ENCODE measurements at regions of chr5 and their contacts with region 1.

Region 1: DNA sequence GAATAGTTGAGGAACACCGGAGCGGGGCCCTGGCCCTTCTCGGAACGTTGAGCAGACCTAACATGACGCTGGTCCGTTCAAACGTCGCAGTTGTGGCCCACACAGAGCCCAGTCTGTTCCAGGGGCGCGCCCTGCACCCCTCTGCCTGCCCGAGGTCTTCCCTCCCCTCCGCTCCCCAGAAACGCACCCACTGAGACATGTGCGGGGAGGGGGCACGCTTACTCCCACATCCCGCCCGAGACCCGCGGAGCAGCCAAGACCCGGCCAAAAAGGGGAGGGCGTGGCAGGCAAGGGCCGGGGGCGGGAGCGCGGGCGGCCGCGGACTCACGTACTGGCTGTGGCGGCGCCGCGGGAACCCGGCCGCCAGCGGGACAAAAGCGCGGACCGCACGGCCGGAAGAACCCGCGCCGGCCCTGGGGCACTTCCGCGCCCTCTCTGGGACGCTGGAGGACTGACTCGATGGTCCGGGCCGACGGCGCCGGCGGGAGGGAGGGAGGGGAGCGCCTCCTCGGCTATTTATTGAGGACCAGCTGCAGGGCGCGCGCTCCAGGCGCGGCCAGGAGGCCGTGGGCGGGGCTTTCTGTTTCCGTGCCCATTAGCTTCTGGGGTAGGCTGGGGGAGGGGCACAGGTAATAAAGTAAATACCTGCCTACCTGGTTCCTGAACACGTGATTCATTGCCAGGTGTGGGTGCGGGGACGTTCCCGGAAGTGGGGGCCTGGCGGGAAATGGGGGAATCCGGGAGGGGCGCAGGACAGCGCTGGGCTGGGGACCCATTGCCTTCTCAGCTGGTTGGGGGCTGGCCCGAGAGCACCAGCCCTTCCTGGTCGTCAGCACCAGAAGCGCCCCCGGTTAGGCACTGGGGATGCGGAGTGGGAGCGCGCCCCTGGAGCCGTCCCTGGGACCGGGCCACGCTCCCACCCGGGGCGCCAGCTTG is at the start of gene ZFP62:
- DNase-seq: peak; percentile 90
- H3K4me3 ChIP-seq: peak within 1 kb of the TSS; percentile 44 to 79 (median 67)
- H3K27ac ChIP-seq: peak within 1 kb of the TSS; percentile 55
- H3K4me1 ChIP-seq: peaks cover 10% of the 10 kb centered on the region
- H3K27me3 ChIP-seq: no peaks in the 10 kb centered on the region
- CTCF ChIP-seq: no peak
- POLR2A ChIP-seq: peak; percentile 59
- total RNA-seq, gene ZFP62: 14.6 and 19.7 TPM in 2 replicates

Region 2: GRCh38 chr5:180802325-180803180 is 58.6 kb before region 1 on chr5 and contains the start of gene MGAT1:
- CTCF ChIA-PET with region 1: no interaction called
- POLR2A ChIA-PET with region 1: no interaction called
- dilution Hi-C with region 1: no loop called
- intact Hi-C with region 1: loop called (anchors 1 kb)
- DNase-seq: peak; percentile 87
- H3K4me3 ChIP-seq: peak within 1 kb of the TSS; percentile 46 to 98 (median 69)
- H3K27ac ChIP-seq: peak within 1 kb of the TSS; percentile 67
- H3K4me1 ChIP-seq: peaks cover 44% of the 10 kb centered on the region
- H3K27me3 ChIP-seq: no peaks in the 10 kb centered on the region
- CTCF ChIP-seq: no peak
- POLR2A ChIP-seq: peak; percentile 85
- total RNA-seq, gene MGAT1: 108 and 123 TPM in 2 replicates

Region 3: GRCh38 chr5:180810210-180810958 is 50.8 kb before region 1 on chr5:
- CTCF ChIA-PET with region 1: no interaction called
- POLR2A ChIA-PET with region 1: interaction called, 3 read pairs
- dilution Hi-C with region 1: no loop called
- intact Hi-C with region 1: loop called (anchors 1 kb)
- DNase-seq: peak; percentile 95
- H3K4me3 ChIP-seq: peak overlapping the region; percentile 43 to 72 (median 60)
- H3K27ac ChIP-seq: peak overlapping the region; percentile 88
- H3K4me1 ChIP-seq: peaks cover 38% of the 10 kb centered on the region
- H3K27me3 ChIP-seq: no peaks in the 10 kb centered on the region
- CTCF ChIP-seq: no peak
- POLR2A ChIP-seq: peak; percentile 56

Region 4: GRCh38 chr5:180816608-180817534 is 44.3 kb before region 1 on chr5:
- CTCF ChIA-PET with region 1: no interaction called
- POLR2A ChIA-PET with region 1: no interaction called
- dilution Hi-C with region 1: no loop called
- intact Hi-C with region 1: loop called (anchors 1 kb)
- DNase-seq: peak; percentile 83
- H3K4me3 ChIP-seq: no peak overlapping the region
- H3K27ac ChIP-seq: peak overlapping the region; percentile 39
- H3K4me1 ChIP-seq: peaks cover 24% of the 10 kb centered on the region
- H3K27me3 ChIP-seq: no peaks in the 10 kb centered on the region
- CTCF ChIP-seq: no peak
- POLR2A ChIP-seq: no peak

Region 5: DNA sequence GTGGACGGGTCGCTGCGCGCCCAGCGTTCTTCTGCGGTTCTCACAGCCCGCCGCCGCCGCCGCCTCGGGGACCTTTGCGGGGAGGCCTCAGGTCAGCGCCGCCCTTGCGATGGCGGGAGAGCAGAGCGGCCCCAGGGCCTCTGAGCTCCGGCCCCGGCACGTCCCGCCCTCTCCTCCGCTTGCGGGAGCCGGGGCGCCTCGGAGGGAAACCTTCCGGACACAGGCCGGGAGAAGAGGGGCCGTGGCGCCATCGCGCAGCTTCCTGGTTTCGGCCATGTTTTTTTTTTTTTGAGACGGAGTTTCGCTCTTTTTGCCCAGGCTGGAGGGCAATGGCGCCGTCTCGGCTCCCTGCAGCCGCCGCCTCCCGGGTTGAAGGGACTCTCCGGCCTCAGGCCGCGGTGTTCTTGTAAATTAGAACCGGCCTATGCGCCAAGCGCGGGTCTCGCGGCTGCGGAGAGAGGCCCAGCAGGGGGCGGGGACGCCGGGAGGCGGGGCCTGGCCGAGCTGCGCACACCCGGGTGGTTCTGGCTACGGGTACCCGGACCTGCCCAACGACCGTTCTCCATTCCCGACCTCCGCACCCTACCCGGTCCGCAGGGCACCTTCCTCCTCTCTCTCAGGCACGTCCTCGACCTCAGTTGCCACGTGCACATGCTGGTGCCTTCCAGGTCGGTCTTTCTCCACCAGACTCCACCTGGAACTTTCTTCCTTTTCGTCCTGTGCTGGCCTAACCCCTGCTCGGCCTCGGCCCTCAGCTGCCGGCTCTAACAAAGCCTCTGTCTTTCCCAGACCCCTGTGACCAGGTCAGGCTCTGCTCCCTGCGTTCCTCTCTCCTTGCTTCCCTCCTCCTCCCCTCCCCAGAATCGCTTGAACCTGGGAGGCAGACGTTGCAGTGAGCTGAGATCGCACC is 29.8 kb before region 1 on chr5:
- CTCF ChIA-PET with region 1: no interaction called
- POLR2A ChIA-PET with region 1: no interaction called
- dilution Hi-C with region 1: no loop called
- intact Hi-C with region 1: loop called (anchors 1 kb)
- DNase-seq: peak; percentile 80
- H3K4me3 ChIP-seq: peak overlapping the region; percentile 51 to 63 (median 59)
- H3K27ac ChIP-seq: peak overlapping the region; percentile 69
- H3K4me1 ChIP-seq: peaks cover 10% of the 10 kb centered on the region
- H3K27me3 ChIP-seq: no peaks in the 10 kb centered on the region
- CTCF ChIP-seq: peak in 1 of 2 donors; percentile 32
- POLR2A ChIP-seq: peak; percentile 87

Region 6: DNA sequence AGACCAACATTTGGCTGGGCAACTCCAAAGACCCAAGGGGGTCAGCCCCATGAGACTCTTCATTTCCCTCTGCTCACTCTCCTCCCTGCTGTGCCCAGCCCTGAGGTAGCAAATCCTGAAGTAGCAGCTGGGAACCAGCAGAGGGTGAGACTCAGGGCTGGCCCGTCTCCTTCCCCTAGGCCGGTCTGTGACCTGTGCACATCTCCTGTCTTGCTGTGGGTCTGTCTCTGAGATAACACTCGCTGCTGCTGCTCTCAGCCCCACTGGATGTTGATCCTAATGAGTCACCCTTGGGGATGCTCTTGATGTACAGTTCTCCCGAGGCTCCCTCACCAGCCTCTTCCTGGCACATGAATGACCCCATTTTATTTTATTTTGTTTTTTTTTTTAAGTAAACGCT is 277.1 kb after region 1 on chr5:
- CTCF ChIA-PET with region 1: no interaction called
- POLR2A ChIA-PET with region 1: no interaction called
- dilution Hi-C with region 1: no loop called
- intact Hi-C with region 1: no loop called
- DNase-seq: no peak
- H3K4me3 ChIP-seq: no peak overlapping the region
- H3K27ac ChIP-seq: no peak overlapping the region
- H3K4me1 ChIP-seq: peaks cover 6% of the 10 kb centered on the region
- H3K27me3 ChIP-seq: no peaks in the 10 kb centered on the region
- CTCF ChIP-seq: no peak
- POLR2A ChIP-seq: no peak

Measured in endothelial cell of umbilical vein (primary cell).